ENCODE measurements at regions of chr14 and their contacts with region 1.

Region 1: GRCh38 chr14:61456720-61457119 is 135.3 kb downstream of the PRKCH start:
- DNase-seq: peak; percentile 66 to 91 (median 86)
- ATAC-seq: peak; percentile 39
- H3K4me3 ChIP-seq: no peak overlapping the region
- H3K4me3 Mint-ChIP-seq: no peak overlapping the region
- H3K27ac ChIP-seq: no peak overlapping the region
- H3K27ac Mint-ChIP-seq: peak overlapping the region; percentile 86
- H3K4me1 ChIP-seq: peaks cover 70% of the 10 kb centered on the region
- H3K4me1 Mint-ChIP-seq: peaks cover 85% of the 10 kb centered on the region
- H3K27me3 ChIP-seq: no peaks in the 10 kb centered on the region
- H3K27me3 Mint-ChIP-seq: no peaks in the 10 kb centered on the region
- CTCF ChIP-seq: peak; percentile 84

Region 2: DNA sequence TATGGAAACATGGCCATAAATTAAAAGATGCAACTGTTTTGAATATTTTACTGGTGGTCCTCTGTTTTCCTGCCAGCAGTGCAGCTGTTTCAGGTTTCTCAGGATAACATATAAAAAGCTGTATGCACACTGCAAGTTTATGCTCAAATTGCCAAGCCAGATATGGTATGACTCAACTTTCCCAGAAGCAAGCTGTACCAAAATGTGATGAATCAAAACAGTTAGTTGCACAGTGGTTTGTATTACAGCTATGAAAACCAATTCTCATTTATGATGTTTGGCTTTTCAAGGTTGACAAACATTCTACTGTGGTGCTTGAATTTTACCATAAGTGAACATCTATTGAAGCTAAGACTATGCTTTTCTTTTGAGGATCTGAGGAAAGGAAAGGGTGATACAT is 491.3 kb before region 1 on chr14:
- CTCF ChIA-PET with region 1: no interaction called
- POLR2A ChIA-PET with region 1: no interaction called
- intact Hi-C with region 1: no loop called
- DNase-seq: no peak
- ATAC-seq: no peak
- H3K4me3 ChIP-seq: no peak overlapping the region
- H3K4me3 Mint-ChIP-seq: no peak overlapping the region
- H3K27ac ChIP-seq: no peak overlapping the region
- H3K27ac Mint-ChIP-seq: no peak overlapping the region
- H3K4me1 ChIP-seq: no peaks in the 10 kb centered on the region
- H3K4me1 Mint-ChIP-seq: no peaks in the 10 kb centered on the region
- H3K27me3 ChIP-seq: no peaks in the 10 kb centered on the region
- H3K27me3 Mint-ChIP-seq: no peaks in the 10 kb centered on the region
- CTCF ChIP-seq: no peak

Region 3: DNA sequence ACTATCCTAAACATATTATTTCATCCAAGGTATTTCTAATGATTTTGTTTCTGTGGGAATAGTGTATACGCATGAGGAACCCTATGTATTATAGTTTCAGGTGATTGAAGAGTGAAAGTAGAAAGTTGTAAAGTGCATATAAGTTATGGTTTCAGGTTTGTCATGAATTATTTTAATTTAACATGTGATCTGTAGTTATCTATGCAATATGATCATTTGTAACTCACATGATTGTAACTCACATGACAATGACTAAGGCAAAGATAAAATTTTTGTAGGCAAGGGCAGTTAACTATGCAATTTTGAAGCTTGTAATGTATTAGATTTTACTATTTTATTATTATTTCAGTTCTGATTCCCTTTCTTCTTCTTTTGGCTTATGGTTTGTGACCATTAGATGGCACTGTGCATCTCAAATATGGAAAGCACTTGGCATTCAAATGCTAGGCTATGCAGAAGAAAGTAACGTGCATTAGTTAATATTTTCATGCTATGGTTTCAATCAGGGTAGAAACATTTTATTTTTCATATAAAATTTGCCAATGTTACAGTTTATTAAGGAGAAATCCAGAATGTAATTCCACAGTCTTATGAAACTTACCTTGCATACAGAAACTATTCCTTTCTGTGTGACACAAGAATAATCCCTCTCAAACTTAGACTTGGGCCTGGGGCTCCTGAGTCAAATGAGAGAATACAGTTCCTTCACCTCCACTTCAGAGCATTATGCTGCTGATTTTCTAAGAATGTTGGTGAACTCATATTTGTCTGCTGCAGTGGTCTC is 159.8 kb before region 1 on chr14:
- CTCF ChIA-PET with region 1: interaction called, 7 read pairs
- POLR2A ChIA-PET with region 1: interaction called, 3 read pairs
- intact Hi-C with region 1: loop called (anchors 1 to 2 kb)
- DNase-seq: peak in 2 of 9 experiments; percentile 69 to 79
- ATAC-seq: peak; percentile 73
- H3K4me3 ChIP-seq: no peak overlapping the region
- H3K4me3 Mint-ChIP-seq: no peak overlapping the region
- H3K27ac ChIP-seq: peak overlapping the region in 1 of 2 experiments; percentile 40
- H3K27ac Mint-ChIP-seq: peak overlapping the region; percentile 78
- H3K4me1 ChIP-seq: peaks cover 39% of the 10 kb centered on the region
- H3K4me1 Mint-ChIP-seq: peaks cover 54% of the 10 kb centered on the region
- H3K27me3 ChIP-seq: no peaks in the 10 kb centered on the region
- H3K27me3 Mint-ChIP-seq: no peaks in the 10 kb centered on the region
- CTCF ChIP-seq: peak; percentile 89

Region 4: GRCh38 chr14:61342486-61342885 is 114.2 kb before region 1 on chr14:
- CTCF ChIA-PET with region 1: interaction called, 6 read pairs
- POLR2A ChIA-PET with region 1: interaction called, 13 read pairs
- intact Hi-C with region 1: loop called in 1 of 2 experiments (anchors 1 kb)
- DNase-seq: peak; percentile 60 to 94 (median 85)
- ATAC-seq: peak; percentile 49
- H3K4me3 ChIP-seq: peak overlapping the region in 1 of 2 experiments; percentile 25
- H3K4me3 Mint-ChIP-seq: peak overlapping the region; percentile 77
- H3K27ac ChIP-seq: peak overlapping the region; percentile 39 to 77
- H3K27ac Mint-ChIP-seq: peak overlapping the region; percentile 99
- H3K4me1 ChIP-seq: peaks cover 94% of the 10 kb centered on the region
- H3K4me1 Mint-ChIP-seq: peaks cover 95% of the 10 kb centered on the region
- H3K27me3 ChIP-seq: no peaks in the 10 kb centered on the region
- H3K27me3 Mint-ChIP-seq: no peaks in the 10 kb centered on the region
- CTCF ChIP-seq: no peak

Region 5: DNA sequence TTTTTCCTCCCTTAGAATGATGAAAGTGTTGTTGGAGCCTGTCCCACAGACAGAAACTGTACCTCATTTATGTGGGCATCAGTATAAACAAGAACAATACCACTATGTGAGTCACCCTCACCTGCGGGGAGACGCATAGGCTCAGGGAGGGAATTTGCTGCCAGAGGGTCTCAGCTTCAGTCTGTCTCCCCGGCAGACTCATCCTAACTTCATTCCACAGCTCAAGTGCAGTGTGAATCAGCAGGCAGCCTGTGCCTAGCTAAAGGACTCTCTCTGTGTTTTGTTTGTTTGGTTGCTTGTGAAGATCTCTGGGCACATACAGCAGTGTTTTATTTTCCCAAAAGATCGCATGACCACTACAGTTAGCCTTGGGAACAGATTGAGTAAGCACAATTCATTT is 36.4 kb before region 1 on chr14:
- CTCF ChIA-PET with region 1: interaction called, 3 read pairs
- POLR2A ChIA-PET with region 1: interaction called, 3 read pairs
- intact Hi-C with region 1: loop called in 1 of 2 experiments (anchors 5 kb)
- DNase-seq: peak in 5 of 9 experiments; percentile 43 to 66 (median 55)
- ATAC-seq: peak; percentile 62
- H3K4me3 ChIP-seq: no peak overlapping the region
- H3K4me3 Mint-ChIP-seq: peak overlapping the region; percentile 61
- H3K27ac ChIP-seq: peak overlapping the region in 1 of 2 experiments; percentile 51
- H3K27ac Mint-ChIP-seq: peak overlapping the region; percentile 96
- H3K4me1 ChIP-seq: peaks cover 85% of the 10 kb centered on the region
- H3K4me1 Mint-ChIP-seq: peaks cover 89% of the 10 kb centered on the region
- H3K27me3 ChIP-seq: no peaks in the 10 kb centered on the region
- H3K27me3 Mint-ChIP-seq: no peaks in the 10 kb centered on the region
- CTCF ChIP-seq: no peak

Region 6: GRCh38 chr14:61444215-61444768 is 12.4 kb before region 1 on chr14:
- CTCF ChIA-PET with region 1: interaction called, 4 read pairs
- POLR2A ChIA-PET with region 1: interaction called, 11 read pairs
- intact Hi-C with region 1: loop called in 1 of 2 experiments (anchors 1 kb)
- DNase-seq: peak in 8 of 9 experiments; percentile 54 to 89 (median 71)
- ATAC-seq: peak; percentile 83
- H3K4me3 ChIP-seq: no peak overlapping the region
- H3K4me3 Mint-ChIP-seq: peak overlapping the region; percentile 77
- H3K27ac ChIP-seq: peak overlapping the region; percentile 28 to 81
- H3K27ac Mint-ChIP-seq: peak overlapping the region; percentile 94
- H3K4me1 ChIP-seq: peaks cover 95% of the 10 kb centered on the region
- H3K4me1 Mint-ChIP-seq: peaks cover 96% of the 10 kb centered on the region
- H3K27me3 ChIP-seq: no peaks in the 10 kb centered on the region
- H3K27me3 Mint-ChIP-seq: no peaks in the 10 kb centered on the region
- CTCF ChIP-seq: no peak

Measured in CD8-positive, alpha-beta T cell (primary cell).